GM23248 (cell line): ENCODE measurements at regions of chr18 and their contacts with region 1.

Region 1: GRCh38 chr18:75422341-75422910 is 5.1 kb downstream of the SMIM21 start:
- DNase-seq: peak; percentile 14
- H3K4me3 ChIP-seq: no peak overlapping the region
- H3K27ac ChIP-seq: no peak overlapping the region
- H3K4me1 ChIP-seq: no peaks in the 10 kb centered on the region
- H3K27me3 ChIP-seq: no peaks in the 10 kb centered on the region; the same call in 1 of the 2 replicates

Region 2: DNA sequence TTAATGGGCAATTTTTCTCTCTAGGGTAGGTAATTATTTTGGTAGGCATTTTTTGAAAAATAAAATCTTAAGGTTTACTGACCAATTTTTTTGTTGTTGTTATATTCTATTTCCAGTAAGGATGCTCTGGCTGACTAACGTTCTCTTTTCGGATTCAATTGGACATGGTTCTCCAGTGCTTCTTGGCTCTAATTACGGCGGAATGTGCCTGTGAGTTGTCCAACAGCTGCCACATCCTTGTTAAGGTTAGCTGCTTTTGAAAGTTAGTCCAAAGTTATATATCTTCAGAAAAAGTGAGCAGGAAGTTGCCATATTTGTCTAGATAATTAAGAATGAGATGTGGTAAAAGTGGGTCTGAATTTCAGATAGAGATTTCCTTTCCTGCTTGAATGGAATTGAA is 50.9 kb after region 1 on chr18:
- in situ Hi-C with region 1: loop called (anchors 5 kb)
- DNase-seq: peak; percentile 24
- H3K4me3 ChIP-seq: no peak overlapping the region
- H3K27ac ChIP-seq: no peak overlapping the region
- H3K4me1 ChIP-seq: peaks cover 24% of the 10 kb centered on the region
- H3K27me3 ChIP-seq: no peaks in the 10 kb centered on the region